Prostate gland (tissue), 2 donors: ENCODE measurements at regions of chr9 and their contacts with region 1.

Region 1: DNA sequence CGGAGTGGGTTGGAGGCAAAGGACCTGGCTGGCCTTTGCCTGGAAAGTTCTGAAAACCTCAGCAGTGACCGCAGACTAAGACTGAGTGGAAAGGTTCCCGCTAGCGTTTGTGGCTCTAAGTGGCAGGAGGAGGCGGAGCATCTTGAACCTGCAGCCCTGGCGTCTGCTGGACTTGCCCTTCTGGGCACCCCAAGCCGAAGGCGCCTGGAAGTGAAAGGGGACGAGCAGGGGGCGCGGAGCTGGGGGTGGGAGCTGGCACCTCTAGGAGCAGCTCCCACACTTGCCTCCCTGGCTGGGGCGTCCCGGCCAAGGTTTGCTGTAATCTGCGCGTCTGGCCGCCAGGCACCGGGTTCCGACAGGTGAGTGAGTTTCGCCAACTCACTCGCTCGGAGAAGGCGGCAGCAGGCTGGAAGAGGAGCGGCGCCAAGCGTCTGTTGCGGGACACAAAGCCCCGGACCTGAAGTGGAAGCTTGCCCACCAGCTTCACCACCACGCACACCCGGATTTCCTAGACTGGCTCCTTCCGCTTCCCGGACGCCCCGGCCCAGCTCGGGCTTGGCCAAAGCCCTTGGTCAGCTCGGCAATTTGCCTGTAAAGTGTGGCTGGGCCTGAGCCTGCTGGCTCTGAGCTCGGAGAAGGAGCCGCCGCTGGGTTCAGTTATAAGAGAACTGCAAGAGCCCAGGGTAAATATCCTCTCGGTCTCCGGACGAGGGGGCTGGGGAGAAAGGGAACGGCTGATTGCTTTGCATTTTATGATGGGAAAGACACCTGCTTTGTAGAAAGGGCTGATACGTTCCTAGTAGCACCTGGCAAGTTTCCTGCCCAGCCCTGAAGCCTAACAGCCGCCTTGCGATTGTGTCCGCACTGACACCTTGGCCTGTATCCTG is at the start of gene GNA14:
- DNase-seq: peak; percentile 59
- H3K4me3 ChIP-seq: peak within 1 kb of the TSS; percentile 42 to 47
- H3K27ac ChIP-seq: peak within 1 kb of the TSS; percentile 43 to 61
- H3K4me1 ChIP-seq: peaks cover 6% of the 10 kb centered on the region
- H3K27me3 ChIP-seq: no peaks in the 10 kb centered on the region
- CTCF ChIP-seq: peak in 1 of 4 experiments; percentile 25
- POLR2A ChIP-seq: no peak
- total RNA-seq, gene GNA14: 2.4 to 5.5 TPM

Region 2: DNA sequence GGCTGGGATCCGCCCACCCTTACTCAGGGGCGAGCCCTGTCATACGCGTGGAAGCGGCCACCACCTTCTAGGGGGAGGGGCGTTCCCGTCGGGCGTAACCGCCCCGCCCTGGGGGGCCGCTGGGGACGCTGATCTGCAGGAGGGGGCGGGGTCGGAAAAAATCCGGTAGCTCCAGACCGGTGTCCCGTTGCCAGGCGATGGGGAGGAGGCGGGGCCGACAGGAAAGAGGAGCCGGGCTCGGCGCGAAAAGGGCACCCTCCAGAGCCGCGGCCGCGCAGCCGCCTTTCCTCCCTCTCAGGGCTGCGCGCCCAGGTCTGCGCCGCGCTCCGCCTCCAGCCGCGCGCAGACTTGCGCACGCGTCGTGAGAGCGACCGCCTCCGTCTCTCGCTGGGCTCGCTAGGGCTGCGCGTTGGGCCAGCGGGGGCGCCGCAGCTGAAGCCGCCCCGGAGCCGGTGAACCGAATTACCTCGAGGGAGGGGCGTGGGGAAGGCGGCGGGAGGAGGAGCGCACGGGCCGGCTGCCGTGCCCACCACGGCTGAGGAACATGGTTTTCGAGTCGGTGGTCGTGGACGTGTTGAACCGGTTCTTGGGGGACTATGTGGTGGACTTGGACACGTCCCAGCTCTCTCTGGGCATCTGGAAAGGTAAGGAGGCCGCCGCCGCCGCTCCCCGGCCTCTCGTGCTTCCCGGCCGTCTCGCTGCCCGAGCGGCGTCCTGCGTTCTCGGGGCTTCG is 471.1 kb before region 1 on chr9 and contains the start of gene VPS13A:
- intact Hi-C with region 1: loop called (anchors 5 kb)
- DNase-seq: peak; percentile 92
- H3K4me3 ChIP-seq: peak within 1 kb of the TSS; percentile 69 to 71
- H3K27ac ChIP-seq: peak within 1 kb of the TSS; percentile 81 to 83
- H3K4me1 ChIP-seq: no peaks in the 10 kb centered on the region
- H3K27me3 ChIP-seq: no peaks in the 10 kb centered on the region
- CTCF ChIP-seq: peak in 3 of 4 experiments; percentile 14 to 31 (median 15)
- POLR2A ChIP-seq: peak; percentile 75
- total RNA-seq, gene VPS13A: 22.7 to 25.2 TPM

Region 3: DNA sequence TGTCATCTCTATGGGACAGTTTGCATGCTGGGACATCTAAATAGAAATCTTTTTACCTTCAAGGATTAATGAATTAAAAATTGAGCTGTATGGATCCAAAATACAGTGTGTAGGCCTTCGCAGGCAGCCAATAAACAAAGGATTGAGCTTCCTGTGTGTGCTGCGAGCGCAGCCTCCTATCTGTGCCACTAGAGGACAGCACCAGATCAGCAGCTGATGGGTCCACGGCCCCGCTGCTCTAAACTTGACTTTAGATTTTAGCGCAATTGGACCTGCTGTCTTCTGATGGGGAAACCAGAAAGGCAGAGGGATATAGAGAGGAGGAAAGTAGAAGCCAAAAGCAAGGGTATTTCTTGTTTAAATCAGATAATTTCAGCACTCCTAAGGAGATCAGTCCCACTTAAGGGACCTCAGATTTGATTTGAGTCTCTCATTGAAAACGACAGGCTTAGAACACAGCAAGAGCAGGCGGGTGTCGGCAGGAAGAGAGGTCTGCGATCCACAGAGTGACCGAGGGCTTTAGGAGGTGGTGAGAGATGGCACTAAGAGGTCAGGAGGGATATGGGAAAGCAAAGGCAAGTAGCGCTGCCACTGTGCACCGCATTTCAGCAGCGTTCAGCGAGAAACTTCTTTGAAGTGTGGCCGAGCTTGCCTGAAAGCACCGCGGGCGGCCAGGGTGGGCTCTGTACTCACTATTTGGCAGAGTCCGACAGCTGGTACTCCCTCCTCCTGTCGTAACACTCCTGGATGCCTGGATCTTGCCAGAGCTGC is 214.6 kb before region 1 on chr9:
- intact Hi-C with region 1: loop called (anchors 5 kb)
- DNase-seq: peak; percentile 58
- H3K4me3 ChIP-seq: no peak overlapping the region
- H3K27ac ChIP-seq: no peak overlapping the region
- H3K4me1 ChIP-seq: no peaks in the 10 kb centered on the region
- H3K27me3 ChIP-seq: no peaks in the 10 kb centered on the region
- CTCF ChIP-seq: peak; percentile 68 to 93 (median 80)
- POLR2A ChIP-seq: no peak

Region 4: DNA sequence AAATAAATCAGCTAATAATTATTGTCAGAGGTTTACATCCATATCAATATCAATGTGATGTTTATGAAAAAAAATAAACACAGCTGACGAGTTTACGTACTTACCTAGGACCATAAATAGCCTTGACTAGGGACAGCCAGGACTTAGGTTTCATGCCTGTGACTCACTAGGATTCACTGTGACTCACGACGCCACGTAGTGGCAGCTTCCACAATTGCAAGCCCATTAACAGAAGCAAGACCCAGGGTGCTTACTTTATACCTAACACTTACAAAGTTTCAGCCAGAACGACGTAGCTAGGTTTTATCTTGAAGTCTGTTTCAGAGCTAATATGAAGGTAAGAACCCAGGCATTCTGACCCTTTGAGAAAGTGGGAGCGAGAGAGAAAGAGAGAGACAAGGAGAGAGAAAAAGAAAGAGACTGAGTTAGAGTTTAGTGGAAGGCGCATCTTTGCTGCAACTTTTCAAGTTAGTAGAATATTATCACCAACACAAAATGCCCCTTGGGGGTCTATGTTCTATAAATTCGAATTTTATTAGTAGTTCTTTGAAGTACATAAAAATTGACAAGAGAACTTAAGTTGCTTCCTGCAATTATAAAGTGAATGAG is 191.5 kb before region 1 on chr9:
- intact Hi-C with region 1: loop called (anchors 2 kb)
- DNase-seq: peak; percentile 77
- H3K4me3 ChIP-seq: no peak overlapping the region
- H3K27ac ChIP-seq: no peak overlapping the region
- H3K4me1 ChIP-seq: no peaks in the 10 kb centered on the region
- H3K27me3 ChIP-seq: no peaks in the 10 kb centered on the region
- CTCF ChIP-seq: peak; percentile 70 to 82 (median 76)
- POLR2A ChIP-seq: no peak

Region 5: GRCh38 chr9:77523876-77524275 is 124.6 kb before region 1 on chr9:
- intact Hi-C with region 1: no loop called
- DNase-seq: peak; percentile 20
- H3K4me3 ChIP-seq: no peak overlapping the region
- H3K27ac ChIP-seq: no peak overlapping the region
- H3K4me1 ChIP-seq: peaks cover 9% of the 10 kb centered on the region
- H3K27me3 ChIP-seq: no peaks in the 10 kb centered on the region
- CTCF ChIP-seq: no peak
- POLR2A ChIP-seq: no peak

Region 6: GRCh38 chr9:77705636-77706035 is 57.2 kb after region 1 on chr9:
- intact Hi-C with region 1: no loop called
- DNase-seq: no peak
- H3K4me3 ChIP-seq: no peak overlapping the region
- H3K27ac ChIP-seq: no peak overlapping the region
- H3K4me1 ChIP-seq: no peaks in the 10 kb centered on the region
- H3K27me3 ChIP-seq: no peaks in the 10 kb centered on the region
- CTCF ChIP-seq: no peak
- POLR2A ChIP-seq: no peak

Region 7: DNA sequence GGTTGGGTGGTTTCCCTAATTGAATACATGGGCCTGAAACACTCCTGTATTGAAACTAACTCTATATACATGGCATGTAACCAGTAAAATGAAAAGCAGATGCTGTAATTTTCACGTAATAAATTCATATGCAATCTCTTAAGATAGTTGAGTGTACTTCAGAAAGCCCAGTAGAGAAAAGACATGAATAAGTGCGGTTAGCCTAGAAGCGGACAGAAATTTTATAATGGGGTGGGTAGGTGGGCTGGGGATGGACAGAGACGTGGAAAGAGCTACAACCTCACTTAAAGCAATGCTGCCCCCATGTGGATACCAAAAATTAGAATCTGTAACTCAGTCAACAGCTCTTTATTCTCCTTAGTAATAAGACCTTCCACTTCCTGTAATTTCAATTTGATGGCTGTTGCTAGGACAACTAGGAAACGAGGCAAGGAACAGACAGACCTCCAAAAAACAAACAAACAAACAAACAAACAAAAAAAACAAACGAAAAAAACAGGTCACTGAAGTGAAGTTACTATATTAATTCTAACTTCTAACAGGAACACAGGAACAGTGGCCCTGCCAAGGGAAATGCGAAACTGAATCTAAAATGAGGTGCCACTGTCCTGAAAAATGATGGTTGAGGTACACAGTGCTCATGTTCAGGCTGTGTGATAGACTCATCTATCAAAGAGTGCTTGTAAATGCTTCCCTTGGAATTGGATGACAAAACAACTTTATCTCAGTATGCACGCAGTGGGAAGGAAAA is 103.0 kb after region 1 on chr9:
- intact Hi-C with region 1: loop called (anchors 10 kb)
- DNase-seq: peak; percentile 64
- H3K4me3 ChIP-seq: no peak overlapping the region
- H3K27ac ChIP-seq: peak overlapping the region; percentile 6 to 14
- H3K4me1 ChIP-seq: no peaks in the 10 kb centered on the region
- H3K27me3 ChIP-seq: no peaks in the 10 kb centered on the region
- CTCF ChIP-seq: peak in 3 of 4 experiments; percentile 40 to 68 (median 59)
- POLR2A ChIP-seq: no peak

Region 8: DNA sequence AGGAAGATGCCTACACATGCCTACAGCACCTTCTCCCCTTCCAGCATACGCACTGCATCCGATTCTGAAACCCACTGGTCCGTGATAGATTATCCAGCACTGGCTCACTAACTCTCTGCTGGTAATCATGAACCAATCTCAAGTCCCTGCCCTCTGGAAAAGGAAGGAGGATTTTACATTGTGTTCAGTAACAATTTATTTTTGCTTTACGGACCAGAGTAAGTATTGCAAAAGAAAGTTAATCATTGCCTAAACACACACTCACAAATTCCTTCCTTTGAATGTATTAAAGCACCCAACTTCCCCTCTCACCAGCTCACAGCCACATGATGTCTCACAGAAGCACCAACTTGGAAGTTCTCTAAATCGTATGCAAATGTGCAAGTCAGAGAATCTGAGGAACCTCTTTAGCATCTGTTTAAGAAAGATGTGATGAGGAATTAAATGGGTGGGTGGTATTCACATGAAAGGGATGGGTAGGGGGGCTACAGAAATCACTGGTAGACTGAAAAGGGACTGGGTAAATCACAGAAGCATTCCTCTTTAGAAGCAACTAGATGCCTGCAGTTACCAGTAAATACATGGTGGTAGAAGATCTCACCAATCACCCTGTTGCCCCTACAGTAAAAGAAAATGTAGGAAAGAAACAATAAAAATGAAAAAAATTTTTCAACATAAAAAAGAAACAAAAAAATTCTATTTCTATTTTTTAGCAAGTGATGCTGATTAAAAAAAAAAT is 374.7 kb after region 1 on chr9:
- intact Hi-C with region 1: loop called (anchors 10 kb)
- DNase-seq: no peak
- H3K4me3 ChIP-seq: no peak overlapping the region
- H3K27ac ChIP-seq: no peak overlapping the region
- H3K4me1 ChIP-seq: no peaks in the 10 kb centered on the region
- H3K27me3 ChIP-seq: no peaks in the 10 kb centered on the region
- CTCF ChIP-seq: no peak
- POLR2A ChIP-seq: no peak